Dorsolateral prefrontal cortex (tissue), 120 donors: ENCODE measurements at regions of chr22 and their contacts with region 1.

Region 1: GRCh38 chr22:28442264-28442710 is 237.4 kb downstream of the TTC28 start:
- DNase-seq: peak; percentile 25 to 88 (median 76)
- H3K4me3 ChIP-seq: peak overlapping the region; percentile 41 to 90 (median 72)
- H3K27ac ChIP-seq: peak overlapping the region in 58 of 59 donors; percentile 5 to 91 (median 73)
- H3K27me3 ChIP-seq: no peaks in the 10 kb centered on the region
- CTCF ChIP-seq: peak; percentile 34 to 91 (median 79)

Region 2: DNA sequence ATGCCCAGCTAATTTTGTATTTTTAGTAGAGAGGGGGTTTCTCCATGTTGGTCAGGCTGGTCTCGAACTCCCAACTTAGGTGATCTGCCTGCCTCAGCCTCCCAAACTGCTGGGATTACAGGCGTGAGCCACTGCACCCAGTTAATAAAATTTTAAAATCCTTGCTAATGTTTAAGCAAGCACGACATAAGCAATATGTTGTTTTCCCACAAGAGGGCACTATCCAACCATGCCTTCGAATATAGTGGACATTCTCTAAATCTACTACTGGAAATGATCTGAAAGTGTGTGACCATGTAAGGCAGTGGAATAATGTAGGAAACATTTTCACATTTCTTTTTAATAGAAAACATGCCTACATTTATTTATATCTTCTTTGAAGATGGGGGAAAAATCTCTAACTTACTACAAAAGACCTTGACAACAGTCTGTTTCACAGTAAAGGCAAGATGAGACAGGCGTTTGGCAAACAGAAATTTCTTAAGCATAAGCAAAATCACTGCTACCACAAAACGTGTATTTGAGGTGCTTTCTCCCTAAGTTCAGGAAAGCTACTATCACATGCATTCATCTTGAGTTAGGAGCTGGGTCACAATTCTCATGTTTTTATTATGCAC is 561.4 kb before region 1 on chr22:
- intact Hi-C with region 1: loop called in 1 of 2 experiments (anchors 10 kb)
- DNase-seq: peak in 2 of 10 donors; percentile 33 to 61
- H3K4me3 ChIP-seq: peak overlapping the region in 34 of 59 donors; percentile 1 to 48 (median 23)
- H3K27ac ChIP-seq: peak overlapping the region; percentile 71 to 96 (median 87)
- H3K27me3 ChIP-seq: no peaks in the 10 kb centered on the region
- CTCF ChIP-seq: peak; percentile 65 to 90 (median 84)

Region 3: GRCh38 chr22:28051787-28052356 is 390.4 kb before region 1 on chr22:
- intact Hi-C with region 1: loop called (anchors 2 to 10 kb)
- DNase-seq: peak; percentile 25 to 80 (median 73)
- H3K4me3 ChIP-seq: no peak overlapping the region
- H3K27ac ChIP-seq: no peak overlapping the region
- H3K27me3 ChIP-seq: no peaks in the 10 kb centered on the region
- CTCF ChIP-seq: peak; percentile 66 to 95 (median 88)

Region 4: GRCh38 chr22:28252539-28252938 is 189.7 kb before region 1 on chr22:
- intact Hi-C with region 1: loop called (anchors 5 to 10 kb)
- DNase-seq: no peak
- H3K4me3 ChIP-seq: no peak overlapping the region
- H3K27ac ChIP-seq: no peak overlapping the region
- H3K27me3 ChIP-seq: no peaks in the 10 kb centered on the region
- CTCF ChIP-seq: no peak

Region 5: DNA sequence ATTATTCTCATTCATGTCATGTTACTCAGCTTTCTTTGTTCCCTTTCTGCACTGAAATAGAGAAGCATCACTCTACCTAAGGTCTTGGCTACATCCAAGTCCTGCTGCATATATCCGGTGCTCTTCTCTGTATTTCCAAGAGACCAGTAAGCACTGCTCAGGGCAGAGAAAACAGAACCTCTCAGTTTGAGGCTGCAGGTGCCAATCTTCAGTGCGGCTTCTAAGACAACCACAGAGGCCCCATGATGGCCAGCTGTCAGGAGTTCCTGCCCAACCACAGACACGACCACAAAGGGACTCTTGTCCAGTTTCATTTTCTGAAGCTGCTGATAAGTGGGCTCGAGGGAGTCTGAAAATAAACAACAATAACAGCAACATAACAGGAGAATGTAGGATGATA is 144.8 kb before region 1 on chr22:
- intact Hi-C with region 1: loop called in 1 of 2 experiments (anchors 2 kb)
- DNase-seq: peak in 6 of 10 donors; percentile 14 to 58 (median 46)
- H3K4me3 ChIP-seq: peak overlapping the region in 33 of 59 donors; percentile 1 to 49 (median 21)
- H3K27ac ChIP-seq: peak overlapping the region in 54 of 59 donors; percentile 3 to 83 (median 58)
- H3K27me3 ChIP-seq: no peaks in the 10 kb centered on the region
- CTCF ChIP-seq: peak in 1 of 56 donors; percentile 13

Region 6: GRCh38 chr22:28381429-28382167 is 60.7 kb before region 1 on chr22:
- intact Hi-C with region 1: no loop called
- DNase-seq: no peak
- H3K4me3 ChIP-seq: no peak overlapping the region
- H3K27ac ChIP-seq: peak overlapping the region in 7 of 59 donors; percentile 10 to 47 (median 21)
- H3K27me3 ChIP-seq: no peaks in the 10 kb centered on the region
- CTCF ChIP-seq: no peak